Activated B cell treated with CpG ODN at 0.5 μM for 24 hours (primary cell): ENCODE measurements at regions of chr4 and their contacts with region 1.

Region 1: DNA sequence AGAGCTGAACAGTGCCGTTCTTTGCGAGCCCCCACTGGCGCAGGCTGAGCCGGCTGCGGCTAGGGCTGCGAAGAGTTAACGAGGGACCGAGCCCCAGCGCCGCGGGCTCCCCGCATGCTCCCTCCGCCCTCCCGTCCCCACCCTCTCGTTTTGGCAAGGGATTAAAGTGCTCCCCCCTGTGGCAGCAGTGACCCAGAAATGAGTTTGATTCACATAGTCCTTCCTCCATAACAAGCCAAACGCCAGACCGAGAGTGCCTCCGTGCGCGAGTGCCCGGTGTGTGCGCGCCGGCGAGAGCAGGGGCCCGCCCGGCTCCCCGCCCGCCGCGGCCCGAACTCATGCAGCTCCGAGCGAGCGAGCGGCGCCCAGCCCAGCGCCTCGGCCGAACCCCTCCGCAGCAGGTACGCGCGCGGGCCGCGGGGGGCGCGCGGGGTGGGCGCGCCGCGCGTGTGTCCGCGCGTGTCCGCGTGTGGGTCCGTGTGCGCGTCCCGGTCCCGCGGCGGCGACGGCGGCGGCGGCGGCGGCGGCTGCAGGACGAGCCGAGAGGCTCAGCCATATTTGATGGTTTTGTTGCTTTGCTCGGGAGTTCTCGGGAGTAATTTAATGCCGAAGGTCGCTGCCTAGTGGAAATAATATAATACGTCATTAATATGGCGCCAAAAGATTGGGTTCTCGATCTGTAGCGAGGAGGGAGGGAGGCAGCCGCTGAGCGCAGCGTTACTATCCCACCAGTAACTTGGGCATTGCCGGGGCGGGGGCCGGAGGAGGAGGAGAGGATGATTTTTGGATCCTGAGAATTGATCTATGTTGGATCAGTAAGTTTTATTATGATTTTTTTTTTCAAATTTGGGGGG is at the start of gene JADE1:
- DNase-seq: peak; percentile 79
- ATAC-seq: peak; percentile 69
- H3K4me3 Mint-ChIP-seq: peak within 1 kb of the TSS; percentile 97
- H3K27ac Mint-ChIP-seq: peak within 1 kb of the TSS; percentile 98
- H3K4me1 Mint-ChIP-seq: peaks cover 15% of the 10 kb centered on the region
- H3K27me3 Mint-ChIP-seq: no peaks in the 10 kb centered on the region
- CTCF ChIP-seq: no peak
- total RNA-seq, gene JADE1: 26.2 and 29.2 TPM in 2 replicates

Region 2: GRCh38 chr4:128060699-128061565 is 748.8 kb before region 1 on chr4 and contains the start of gene LARP1B:
- CTCF ChIA-PET with region 1: no interaction called
- POLR2A ChIA-PET with region 1: interaction called, 6 read pairs
- intact Hi-C with region 1: loop called (anchors 1 kb)
- DNase-seq: peak; percentile 95
- ATAC-seq: peak; percentile 89
- H3K4me3 Mint-ChIP-seq: peak within 1 kb of the TSS; percentile 84
- H3K27ac Mint-ChIP-seq: peak within 1 kb of the TSS; percentile 90
- H3K4me1 Mint-ChIP-seq: peaks cover 10% of the 10 kb centered on the region
- H3K27me3 Mint-ChIP-seq: no peaks in the 10 kb centered on the region
- CTCF ChIP-seq: no peak
- total RNA-seq, gene LARP1B: 10.7 and 11.5 TPM in 2 replicates

Region 3: GRCh38 chr4:128454281-128455075 is 355.2 kb before region 1 on chr4:
- CTCF ChIA-PET with region 1: interaction called, 3 read pairs
- POLR2A ChIA-PET with region 1: no interaction called
- intact Hi-C with region 1: loop called (anchors 1 kb)
- DNase-seq: no peak
- ATAC-seq: peak; percentile 88
- H3K4me3 Mint-ChIP-seq: no peak overlapping the region
- H3K27ac Mint-ChIP-seq: no peak overlapping the region
- H3K4me1 Mint-ChIP-seq: peaks cover 8% of the 10 kb centered on the region
- H3K27me3 Mint-ChIP-seq: peaks cover 6% of the 10 kb centered on the region
- CTCF ChIP-seq: no peak

Region 4: GRCh38 chr4:128639541-128640270 is 170.0 kb before region 1 on chr4:
- CTCF ChIA-PET with region 1: no interaction called
- POLR2A ChIA-PET with region 1: no interaction called
- intact Hi-C with region 1: no loop called
- DNase-seq: no peak
- ATAC-seq: no peak
- H3K4me3 Mint-ChIP-seq: no peak overlapping the region
- H3K27ac Mint-ChIP-seq: no peak overlapping the region
- H3K4me1 Mint-ChIP-seq: no peaks in the 10 kb centered on the region
- H3K27me3 Mint-ChIP-seq: no peaks in the 10 kb centered on the region
- CTCF ChIP-seq: no peak

Region 5: DNA sequence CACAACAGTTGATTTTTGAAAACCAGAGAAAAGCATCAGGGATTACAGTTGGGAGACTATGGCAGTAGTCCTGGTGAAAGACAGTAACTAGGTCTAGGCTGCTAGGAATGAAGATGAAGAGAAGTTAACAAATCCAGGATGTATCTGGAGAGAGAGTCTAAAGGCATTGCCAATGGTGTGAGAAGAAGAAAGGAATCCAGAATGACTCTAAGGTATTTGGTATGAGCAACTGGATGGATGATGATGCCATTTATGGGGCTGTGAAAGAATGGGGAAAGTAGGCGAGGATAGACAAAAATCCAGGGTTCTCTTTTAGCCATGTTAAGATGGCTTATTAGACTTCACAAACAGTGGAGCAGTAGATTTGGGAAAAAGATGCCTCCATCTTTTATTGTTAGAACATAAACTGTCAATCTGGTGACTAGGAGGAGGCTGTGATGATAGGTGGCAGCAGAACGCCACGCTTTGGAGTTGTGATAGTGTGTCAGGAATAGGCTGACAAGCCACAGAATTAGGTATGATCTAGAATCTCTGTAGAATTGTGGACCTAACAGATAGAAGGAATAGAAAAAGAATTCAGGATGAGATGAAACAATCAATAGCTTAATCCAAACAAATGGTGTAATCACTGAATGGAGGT is 27.5 kb before region 1 on chr4:
- CTCF ChIA-PET with region 1: no interaction called
- POLR2A ChIA-PET with region 1: no interaction called
- intact Hi-C with region 1: loop called (anchors 2 kb)
- DNase-seq: peak; percentile 19
- ATAC-seq: peak; percentile 49
- H3K4me3 Mint-ChIP-seq: no peak overlapping the region
- H3K27ac Mint-ChIP-seq: no peak overlapping the region
- H3K4me1 Mint-ChIP-seq: no peaks in the 10 kb centered on the region
- H3K27me3 Mint-ChIP-seq: peaks cover 1% of the 10 kb centered on the region
- CTCF ChIP-seq: no peak

Region 6: DNA sequence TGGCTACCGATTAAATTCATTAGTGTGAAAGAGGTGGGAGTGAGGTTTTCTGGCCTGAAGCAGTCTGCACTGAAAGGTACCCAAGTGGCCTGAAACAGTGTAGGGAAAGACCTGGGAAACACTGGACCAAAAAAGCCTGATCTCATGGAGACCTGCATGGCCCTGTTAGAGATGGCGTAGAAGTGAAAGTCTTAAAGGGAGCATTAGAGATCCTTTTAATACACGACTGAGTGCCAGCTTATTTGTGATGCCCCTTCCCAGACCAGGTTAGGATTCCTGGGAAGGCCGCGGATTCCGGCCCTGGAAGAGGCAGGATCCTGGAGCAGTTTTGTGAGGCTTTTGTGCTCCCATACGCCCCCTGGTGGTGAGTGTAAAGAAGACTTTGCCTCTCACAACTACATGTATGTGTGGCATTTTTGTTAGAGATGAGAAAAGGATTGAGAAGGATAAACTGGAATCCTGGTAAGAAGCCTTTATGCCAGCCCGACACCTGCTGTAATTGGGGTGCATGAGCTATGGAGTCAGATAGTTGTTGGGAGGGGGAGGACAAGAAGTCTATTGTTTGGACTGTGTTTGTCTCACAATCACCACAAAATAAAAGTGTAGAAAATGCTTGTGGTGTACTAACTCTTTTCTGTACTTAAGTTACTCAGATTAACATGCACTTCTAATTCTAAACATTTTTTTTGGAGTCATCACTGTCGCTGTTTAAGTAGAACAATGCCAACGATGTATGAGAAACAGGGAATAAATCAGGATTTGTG is 53.8 kb after region 1 on chr4:
- CTCF ChIA-PET with region 1: interaction called, 7 read pairs
- POLR2A ChIA-PET with region 1: interaction called, 3 read pairs
- intact Hi-C with region 1: loop called (anchors 1 kb)
- DNase-seq: peak; percentile 48
- ATAC-seq: peak; percentile 38
- H3K4me3 Mint-ChIP-seq: no peak overlapping the region
- H3K27ac Mint-ChIP-seq: peak overlapping the region; percentile 62
- H3K4me1 Mint-ChIP-seq: peaks cover 37% of the 10 kb centered on the region
- H3K27me3 Mint-ChIP-seq: no peaks in the 10 kb centered on the region
- CTCF ChIP-seq: peak; percentile 60

Region 7: DNA sequence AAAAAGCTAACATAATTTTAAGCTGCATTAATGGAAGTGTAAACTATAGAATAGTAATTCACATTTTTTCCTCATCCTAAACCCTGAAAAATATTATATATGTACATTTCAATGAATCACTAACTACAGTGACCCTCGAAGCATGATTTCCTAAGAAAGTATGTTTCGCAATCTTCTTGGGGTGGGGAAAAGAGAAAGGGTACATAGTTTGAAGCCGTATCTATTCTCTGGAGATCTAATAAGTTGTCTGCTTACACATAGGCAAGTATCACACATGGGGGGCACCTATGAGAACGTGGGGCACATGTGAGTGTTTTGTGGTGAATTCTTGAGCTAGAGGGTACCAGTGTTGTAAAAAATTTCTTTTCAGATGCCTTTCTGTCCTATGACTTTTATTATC is 71.0 kb after region 1 on chr4:
- CTCF ChIA-PET with region 1: no interaction called
- POLR2A ChIA-PET with region 1: no interaction called
- intact Hi-C with region 1: no loop called
- DNase-seq: no peak
- ATAC-seq: no peak
- H3K4me3 Mint-ChIP-seq: no peak overlapping the region
- H3K27ac Mint-ChIP-seq: no peak overlapping the region
- H3K4me1 Mint-ChIP-seq: peaks cover 3% of the 10 kb centered on the region
- H3K27me3 Mint-ChIP-seq: no peaks in the 10 kb centered on the region
- CTCF ChIP-seq: no peak

Region 8: DNA sequence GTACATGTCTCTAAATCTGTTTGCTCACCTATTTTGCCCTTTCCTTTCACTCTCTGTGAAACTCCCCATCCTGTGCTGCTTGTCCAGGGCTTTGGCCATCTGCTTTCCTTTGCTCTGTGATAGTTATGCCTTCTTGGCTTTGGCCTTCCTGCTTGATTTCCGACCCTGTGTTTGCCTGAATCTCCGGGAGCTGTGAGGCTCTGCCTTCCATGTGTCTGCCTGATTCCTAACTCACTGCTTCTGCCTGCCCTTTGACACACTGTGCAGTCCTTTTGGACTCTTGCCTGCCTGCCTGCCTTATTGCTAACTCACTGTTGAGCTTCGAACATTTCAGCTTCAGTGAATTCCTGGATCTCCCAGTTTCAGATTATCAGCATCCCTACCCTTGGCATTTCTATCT is 429.4 kb after region 1 on chr4:
- CTCF ChIA-PET with region 1: no interaction called
- POLR2A ChIA-PET with region 1: interaction called, 10 read pairs
- intact Hi-C with region 1: no loop called
- DNase-seq: no peak
- ATAC-seq: no peak
- H3K4me3 Mint-ChIP-seq: no peak overlapping the region
- H3K27ac Mint-ChIP-seq: no peak overlapping the region
- H3K4me1 Mint-ChIP-seq: no peaks in the 10 kb centered on the region
- H3K27me3 Mint-ChIP-seq: no peaks in the 10 kb centered on the region
- CTCF ChIP-seq: no peak